Activated T-helper 2 cell treated with anti-CD3 and anti-CD28 coated beads, Interferon-gamma antibody, Interleukin-2, Interleukin-4, amounts not matched to agents 10 μg/mL and 5 μg/mL and 100 μg/mL, durations not matched to agents 14 hours and 24 hours and 36 hours (primary cell): ENCODE measurements at regions of chr13 and their contacts with region 1.

Region 1: GRCh38 chr13:36275190-36276002 is 22.2 kb downstream of the CCDC169 start:
- DNase-seq: no peak
- H3K4me3 Mint-ChIP-seq: no peak overlapping the region
- H3K27ac Mint-ChIP-seq: no peak overlapping the region
- H3K4me1 Mint-ChIP-seq: no peaks in the 10 kb centered on the region
- H3K27me3 Mint-ChIP-seq: peaks cover 2% of the 10 kb centered on the region

Region 2: GRCh38 chr13:35978603-35979316 is 296.6 kb before region 1 on chr13:
- intact Hi-C with region 1: loop called (anchors 1 kb)
- DNase-seq: peak; percentile 9
- H3K4me3 Mint-ChIP-seq: no peak overlapping the region
- H3K27ac Mint-ChIP-seq: no peak overlapping the region
- H3K4me1 Mint-ChIP-seq: no peaks in the 10 kb centered on the region
- H3K27me3 Mint-ChIP-seq: no peaks in the 10 kb centered on the region

Region 3: DNA sequence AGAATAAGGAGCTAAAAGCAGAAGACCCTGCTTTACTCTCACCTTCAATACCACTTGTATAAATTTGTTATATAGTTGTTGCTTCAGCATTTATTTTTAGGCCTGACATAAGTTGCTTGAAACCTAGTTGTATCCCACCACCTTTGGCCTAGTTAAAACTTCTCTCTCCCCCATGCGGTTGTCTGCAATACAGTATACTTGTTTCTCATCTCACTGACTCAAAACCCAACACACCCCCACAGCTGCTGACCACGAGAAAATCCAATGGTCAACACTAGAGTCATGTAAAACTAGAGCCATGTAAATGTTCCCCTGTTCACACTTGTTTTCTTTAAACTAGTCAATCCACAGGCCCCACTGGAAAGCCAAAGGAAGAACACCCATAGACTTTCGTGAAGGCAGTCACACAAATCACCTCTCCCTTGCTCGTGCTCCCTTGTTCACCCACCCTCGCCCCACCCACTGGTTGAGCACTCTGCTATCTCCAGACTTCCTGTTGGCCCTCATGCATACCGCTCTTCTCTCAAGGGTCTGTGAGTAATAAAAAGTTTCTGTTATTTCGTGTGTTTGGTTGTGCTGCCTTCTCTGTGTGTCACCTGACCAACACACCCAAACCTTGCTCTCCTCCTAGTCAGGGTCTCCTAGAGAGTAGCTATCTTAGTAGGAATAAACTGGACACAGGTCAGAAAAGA is 35.2 kb after region 1 on chr13:
- intact Hi-C with region 1: no loop called
- DNase-seq: no peak
- H3K4me3 Mint-ChIP-seq: no peak overlapping the region
- H3K27ac Mint-ChIP-seq: peak overlapping the region; percentile 19
- H3K4me1 Mint-ChIP-seq: peaks cover 5% of the 10 kb centered on the region
- H3K27me3 Mint-ChIP-seq: no peaks in the 10 kb centered on the region

Region 4: GRCh38 chr13:36369268-36370107 is 94.1 kb after region 1 on chr13:
- intact Hi-C with region 1: no loop called
- DNase-seq: no peak
- H3K4me3 Mint-ChIP-seq: no peak overlapping the region
- H3K27ac Mint-ChIP-seq: no peak overlapping the region
- H3K4me1 Mint-ChIP-seq: no peaks in the 10 kb centered on the region
- H3K27me3 Mint-ChIP-seq: peaks cover 5% of the 10 kb centered on the region